Panc1 (cell line): ENCODE measurements at regions of chr17 and their contacts with region 1.

Region 1: GRCh38 chr17:58677194-58677880 is 14.5 kb downstream of the TEX14 start:
- DNase-seq: no peak
- ATAC-seq: no peak
- H3K4me3 ChIP-seq: no peak overlapping the region
- H3K27ac ChIP-seq: no peak overlapping the region
- H3K4me1 ChIP-seq: peaks cover 9% of the 10 kb centered on the region; the same call in 1 of the 2 replicates
- H3K27me3 ChIP-seq: no peaks in the 10 kb centered on the region
- CTCF ChIP-seq: no peak

Region 2: DNA sequence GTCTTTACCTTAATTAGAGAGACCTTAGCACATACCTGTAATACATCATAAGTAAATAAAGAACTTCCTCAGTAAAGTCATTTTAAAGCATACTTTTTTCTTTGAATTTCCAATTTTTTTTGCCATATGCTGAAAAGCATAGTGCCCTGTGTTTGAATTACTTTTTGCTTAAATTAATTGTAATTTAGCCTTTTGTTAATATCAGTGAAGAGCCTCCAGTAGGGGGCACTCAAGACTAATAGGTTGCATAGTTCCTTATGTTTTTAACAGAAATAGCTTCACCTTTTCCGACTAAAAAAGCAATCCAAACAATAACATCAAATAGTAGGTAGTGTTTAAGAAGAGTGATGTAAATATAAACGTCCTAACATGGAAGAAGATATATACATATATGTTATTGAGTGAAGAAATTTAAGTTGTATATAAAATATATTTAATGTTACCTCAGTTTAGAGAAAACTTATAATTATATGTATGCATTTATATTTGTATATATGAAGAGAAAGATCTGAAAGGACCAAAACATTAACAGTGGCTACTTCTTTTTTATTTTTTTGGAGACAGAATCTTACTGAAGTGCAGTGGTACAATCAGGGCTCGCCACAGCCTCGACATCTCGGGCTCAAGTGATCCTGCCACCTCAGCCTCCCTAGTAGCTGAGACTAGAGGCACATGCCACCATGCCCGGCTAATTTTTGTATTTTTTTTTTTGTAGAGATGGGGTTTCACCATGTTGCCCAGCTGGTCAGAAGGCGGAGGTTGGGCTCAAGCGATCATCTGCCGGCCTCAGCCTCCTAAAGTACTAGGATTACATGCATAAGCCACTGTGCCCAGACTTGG is 33.8 kb after region 1 on chr17:
- CTCF ChIA-PET with region 1: no interaction called
- POLR2A ChIA-PET with region 1: no interaction called
- in situ Hi-C with region 1: no loop called
- intact Hi-C with region 1: no loop called
- DNase-seq: peak; percentile 15
- ATAC-seq: no peak
- H3K4me3 ChIP-seq: no peak overlapping the region
- H3K27ac ChIP-seq: no peak overlapping the region
- H3K4me1 ChIP-seq: no peaks in the 10 kb centered on the region
- H3K27me3 ChIP-seq: no peaks in the 10 kb centered on the region
- CTCF ChIP-seq: peak; percentile 68; the same call in 1 of the 2 replicates

Region 3: GRCh38 chr17:58989629-58990028 is 312.3 kb after region 1 on chr17:
- CTCF ChIA-PET with region 1: interaction called, 10 read pairs
- POLR2A ChIA-PET with region 1: no interaction called
- in situ Hi-C with region 1: no loop called
- intact Hi-C with region 1: no loop called
- DNase-seq: no peak
- ATAC-seq: no peak
- H3K4me3 ChIP-seq: no peak overlapping the region
- H3K27ac ChIP-seq: no peak overlapping the region
- H3K4me1 ChIP-seq: no peaks in the 10 kb centered on the region
- H3K27me3 ChIP-seq: no peaks in the 10 kb centered on the region
- CTCF ChIP-seq: no peak